Dendritic cell treated with granulocyte-macrophage colony-stimulating factor and Interleukin-4, amounts not matched to agents 40 ng/mL and 50 ng/mL, for 4 days (primary cell): ENCODE measurements at regions of chr1 and their contacts with region 1.

Region 1: DNA sequence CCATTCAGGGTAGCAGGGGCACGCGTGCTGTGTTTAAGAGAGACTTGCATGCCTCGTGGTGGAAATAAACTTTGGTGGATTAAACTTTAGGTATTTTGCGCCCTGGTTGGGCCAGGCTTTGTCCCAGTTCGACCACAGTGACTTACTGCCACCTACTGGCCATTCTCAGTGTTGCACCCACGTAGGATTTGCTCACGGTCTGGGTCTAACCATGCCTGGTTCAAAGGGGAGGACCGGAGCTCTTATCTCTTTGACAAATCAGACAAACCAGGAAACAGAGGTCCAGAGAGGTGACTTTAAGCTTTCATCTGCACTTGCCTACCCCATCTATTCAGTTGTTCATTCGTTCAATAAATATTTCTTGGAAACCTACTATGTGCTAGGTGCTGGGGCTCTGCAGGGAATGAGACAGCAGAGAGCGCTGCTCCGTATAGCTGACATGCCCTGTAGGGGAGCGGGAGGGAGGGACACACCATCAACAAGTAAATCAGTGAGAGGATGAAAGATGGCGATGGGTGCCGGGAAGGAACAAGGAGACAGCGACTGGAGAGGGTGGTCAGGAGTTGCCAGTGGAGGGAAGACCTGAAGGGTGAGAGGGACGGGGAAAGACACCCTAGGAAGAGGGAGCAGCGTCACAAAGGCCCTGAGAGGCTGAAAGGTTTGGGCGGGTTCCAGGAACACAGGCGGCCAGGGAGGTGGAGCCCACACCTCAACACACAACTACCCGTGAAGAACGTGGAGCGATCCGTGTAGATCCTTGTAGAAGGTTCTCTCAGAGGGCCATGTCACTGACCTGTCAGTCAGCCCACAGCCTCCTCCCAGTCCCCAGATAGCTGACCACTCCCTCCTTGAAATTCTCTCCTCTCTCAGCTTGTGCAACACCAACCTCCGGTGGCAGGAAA is 27.2 kb upstream of the TINAGL1 start:
- H3K4me3 Mint-ChIP-seq: peak overlapping the region; percentile 41
- H3K27ac Mint-ChIP-seq: peak overlapping the region; percentile 23
- H3K4me1 Mint-ChIP-seq: peaks cover 17% of the 10 kb centered on the region
- H3K27me3 Mint-ChIP-seq: no peaks in the 10 kb centered on the region

Region 2: DNA sequence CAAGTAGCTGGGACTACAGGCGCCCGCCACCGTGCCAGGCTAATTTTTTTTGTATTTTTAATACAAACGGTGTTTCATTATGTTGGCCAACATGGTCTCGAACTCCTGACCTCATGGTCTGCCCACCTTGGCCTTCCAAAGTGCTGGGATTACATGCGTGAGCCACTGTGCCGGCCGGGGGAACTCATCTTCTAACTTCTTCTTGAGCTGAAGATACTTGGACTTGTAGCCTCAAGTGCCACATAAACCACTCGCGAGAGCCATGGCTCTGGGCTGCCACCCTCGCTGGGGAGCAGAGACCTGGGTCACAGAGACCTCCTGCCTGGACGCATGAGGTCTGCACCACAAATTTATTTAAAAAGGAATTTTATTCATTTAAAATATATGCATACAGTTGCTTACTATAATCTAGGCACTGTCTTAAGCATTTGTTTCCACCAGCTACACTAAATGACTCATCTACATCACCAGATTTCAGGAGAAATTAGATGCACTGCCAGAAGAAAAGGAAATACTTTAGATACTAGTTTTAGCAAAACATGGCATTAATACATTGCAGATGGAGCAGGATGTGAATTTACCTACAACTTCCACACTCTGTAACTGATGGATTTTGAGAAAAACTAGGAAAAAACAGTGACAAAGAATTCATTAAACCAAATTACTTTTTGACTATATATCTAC is 453.7 kb before region 1 on chr1:
- intact Hi-C with region 1: no loop called
- H3K4me3 Mint-ChIP-seq: no peak overlapping the region
- H3K27ac Mint-ChIP-seq: no peak overlapping the region
- H3K4me1 Mint-ChIP-seq: peaks cover 3% of the 10 kb centered on the region
- H3K27me3 Mint-ChIP-seq: peaks cover 2% of the 10 kb centered on the region

Region 3: GRCh38 chr1:31394628-31395193 is 154.4 kb before region 1 on chr1:
- intact Hi-C with region 1: loop called (anchors 1 kb)
- H3K4me3 Mint-ChIP-seq: peak overlapping the region; percentile 71
- H3K27ac Mint-ChIP-seq: no peak overlapping the region
- H3K4me1 Mint-ChIP-seq: peaks cover 32% of the 10 kb centered on the region
- H3K27me3 Mint-ChIP-seq: peaks cover 5% of the 10 kb centered on the region

Region 4: GRCh38 chr1:31422505-31423319 is 126.4 kb before region 1 on chr1:
- intact Hi-C with region 1: loop called (anchors 1 kb)
- H3K4me3 Mint-ChIP-seq: no peak overlapping the region
- H3K27ac Mint-ChIP-seq: no peak overlapping the region
- H3K4me1 Mint-ChIP-seq: peaks cover 9% of the 10 kb centered on the region
- H3K27me3 Mint-ChIP-seq: peaks cover 21% of the 10 kb centered on the region

Region 5: DNA sequence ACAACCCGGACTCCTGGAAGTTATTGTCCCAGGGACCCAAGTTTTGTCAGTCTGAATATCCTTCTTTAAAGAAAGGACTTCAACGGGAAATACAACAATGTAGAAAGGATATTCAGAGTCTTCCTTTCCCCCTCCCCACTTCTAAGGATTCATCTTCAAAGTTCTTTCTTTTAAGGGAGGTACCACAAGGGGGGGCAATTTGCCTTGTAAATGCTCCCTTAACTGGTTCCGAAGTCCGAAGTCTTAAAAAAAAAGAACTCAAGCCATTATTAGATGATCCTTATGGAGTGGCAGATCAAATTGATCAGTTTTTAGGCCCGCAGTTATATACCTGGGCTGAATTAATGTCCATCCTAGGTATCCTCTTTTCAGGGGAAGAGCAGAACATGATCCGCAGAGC is 89.1 kb before region 1 on chr1:
- intact Hi-C with region 1: loop called (anchors 1 kb)
- H3K4me3 Mint-ChIP-seq: no peak overlapping the region
- H3K27ac Mint-ChIP-seq: no peak overlapping the region
- H3K4me1 Mint-ChIP-seq: no peaks in the 10 kb centered on the region
- H3K27me3 Mint-ChIP-seq: peaks cover 3% of the 10 kb centered on the region

Region 6: GRCh38 chr1:31505911-31506497 is 43.2 kb before region 1 on chr1:
- intact Hi-C with region 1: loop called (anchors 5 kb)
- H3K4me3 Mint-ChIP-seq: no peak overlapping the region
- H3K27ac Mint-ChIP-seq: peak overlapping the region; percentile 47
- H3K4me1 Mint-ChIP-seq: peaks cover 32% of the 10 kb centered on the region
- H3K27me3 Mint-ChIP-seq: peaks cover 15% of the 10 kb centered on the region

Region 7: GRCh38 chr1:31593770-31594632 is 44.8 kb after region 1 on chr1:
- intact Hi-C with region 1: no loop called
- H3K4me3 Mint-ChIP-seq: no peak overlapping the region
- H3K27ac Mint-ChIP-seq: no peak overlapping the region
- H3K4me1 Mint-ChIP-seq: peaks cover 26% of the 10 kb centered on the region
- H3K27me3 Mint-ChIP-seq: peaks cover 37% of the 10 kb centered on the region